ENCODE measurements at regions of chr13 and their contacts with region 1.

Region 1: DNA sequence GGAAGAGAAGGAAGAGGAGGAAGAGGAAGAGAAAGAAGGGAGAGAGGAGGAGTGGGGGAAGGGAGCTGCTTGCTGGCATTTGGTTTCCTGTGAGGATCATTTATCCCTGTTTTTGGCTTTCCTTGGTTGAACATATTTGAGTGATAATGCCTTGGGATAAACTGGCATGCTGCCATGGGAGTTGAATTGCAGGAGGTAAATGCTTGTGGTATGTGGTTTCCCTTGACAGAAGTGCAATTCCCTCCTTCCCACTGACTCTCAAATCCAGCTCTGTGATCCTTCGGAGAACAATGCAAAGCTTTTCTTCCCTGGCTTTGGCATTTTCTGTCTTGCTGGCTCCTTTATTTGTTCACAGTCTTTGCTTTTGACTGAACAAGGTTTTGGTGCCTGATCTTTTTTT is 27.2 kb upstream of the CBY2 start:
- DNase-seq: no peak
- H3K4me3 ChIP-seq: no peak overlapping the region
- H3K27ac ChIP-seq: no peak overlapping the region
- H3K4me1 ChIP-seq: no peaks in the 10 kb centered on the region
- H3K27me3 ChIP-seq: no peaks in the 10 kb centered on the region
- CTCF ChIP-seq: no peak
- EP300 ChIP-seq: no peak
- POLR2A ChIP-seq: no peak

Region 2: DNA sequence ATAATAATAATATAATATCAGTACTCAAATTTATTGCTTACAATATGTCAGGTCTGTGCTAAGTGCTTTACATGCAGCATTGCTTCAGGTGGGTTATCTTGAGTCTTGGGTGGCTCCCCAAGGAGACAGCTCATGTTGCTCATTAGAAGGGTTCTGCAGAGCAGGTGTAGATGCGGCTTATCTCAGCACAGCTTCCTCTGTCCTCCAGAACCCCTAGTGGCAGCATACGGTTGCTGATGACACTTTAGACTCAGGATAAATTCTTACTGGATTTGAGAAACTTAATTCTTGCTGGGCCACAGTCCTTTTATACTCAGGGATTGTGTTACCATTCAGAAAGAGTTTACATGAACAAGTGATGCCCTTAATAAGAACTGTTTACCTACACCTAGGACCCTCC is 201.3 kb before region 1 on chr13:
- intact Hi-C with region 1: no loop called
- DNase-seq: no peak
- H3K4me3 ChIP-seq: no peak overlapping the region
- H3K27ac ChIP-seq: no peak overlapping the region
- H3K4me1 ChIP-seq: peaks cover 4% of the 10 kb centered on the region
- H3K27me3 ChIP-seq: no peaks in the 10 kb centered on the region
- CTCF ChIP-seq: no peak
- EP300 ChIP-seq: no peak
- POLR2A ChIP-seq: no peak

Region 3: DNA sequence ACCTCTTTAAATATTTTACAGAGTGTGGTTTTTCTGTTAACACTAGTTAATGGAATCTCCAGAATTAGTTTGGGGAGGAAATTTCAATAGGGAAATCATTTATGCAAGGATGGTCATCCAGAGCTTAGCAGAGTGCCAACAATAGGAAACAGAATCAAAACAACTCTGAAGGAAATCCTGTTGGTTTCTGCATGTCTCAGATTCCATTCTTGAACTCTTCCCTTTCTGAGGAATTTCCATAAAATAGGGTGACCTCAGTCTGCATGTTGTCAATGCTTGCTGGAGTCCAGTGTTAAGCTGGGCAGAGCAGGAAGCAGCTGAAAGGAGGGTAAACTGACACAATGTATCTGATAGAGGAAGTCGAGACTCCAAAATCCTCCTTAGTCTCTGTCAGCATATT is 44.1 kb after region 1 on chr13:
- intact Hi-C with region 1: loop called in 1 of 4 experiments (anchors 1 kb)
- DNase-seq: no peak
- H3K4me3 ChIP-seq: no peak overlapping the region
- H3K27ac ChIP-seq: no peak overlapping the region
- H3K4me1 ChIP-seq: no peaks in the 10 kb centered on the region
- H3K27me3 ChIP-seq: no peaks in the 10 kb centered on the region
- CTCF ChIP-seq: no peak
- EP300 ChIP-seq: no peak
- POLR2A ChIP-seq: no peak